ENCODE measurements at regions of chr15 and their contacts with region 1.

Region 1: GRCh38 chr15:90529371-90530249 is at the start of gene CRTC3:
- DNase-seq: peak; percentile 48
- ATAC-seq: peak; percentile 96
- H3K4me3 ChIP-seq: peak within 1 kb of the TSS; percentile 92
- H3K27ac ChIP-seq: peak within 1 kb of the TSS; percentile 94
- H3K4me1 ChIP-seq: peaks cover 11% of the 10 kb centered on the region
- H3K27me3 ChIP-seq: no peaks in the 10 kb centered on the region
- CTCF ChIP-seq: peak; percentile 23; the same call in 1 of the 2 replicates
- POLR2A ChIP-seq: peak; percentile 66; the same call in 1 of the 2 replicates
- RAD21 ChIP-seq: no peak
- total RNA-seq, gene CRTC3: 4.7 and 6.7 TPM in 2 replicates

Region 2: DNA sequence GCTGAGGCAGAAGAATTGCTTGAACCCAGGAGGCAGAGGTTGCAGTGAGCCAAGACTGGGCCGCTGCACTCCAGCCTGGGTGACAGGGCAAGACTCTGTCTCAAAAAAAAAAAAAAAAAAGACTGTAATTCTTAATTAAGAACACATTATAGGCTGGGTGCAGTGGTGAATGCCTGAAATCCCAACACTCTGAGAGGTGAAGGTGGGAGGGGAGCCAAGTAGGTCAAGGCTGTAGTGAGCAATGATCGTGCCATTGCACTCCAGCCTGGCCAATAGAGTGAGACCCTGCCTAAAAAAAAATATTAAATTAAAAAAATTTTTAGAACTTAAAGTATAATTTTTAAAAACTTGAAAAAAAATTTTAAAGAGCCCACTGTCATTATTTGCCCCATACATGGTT is 603.5 kb before region 1 on chr15:
- CTCF ChIA-PET with region 1: no interaction called
- POLR2A ChIA-PET with region 1: interaction called, 17 read pairs
- dilution Hi-C with region 1: no loop called
- in situ Hi-C with region 1: no loop called
- intact Hi-C with region 1: no loop called
- DNase-seq: no peak
- ATAC-seq: no peak
- H3K4me3 ChIP-seq: no peak overlapping the region
- H3K27ac ChIP-seq: no peak overlapping the region
- H3K4me1 ChIP-seq: no peaks in the 10 kb centered on the region
- H3K27me3 ChIP-seq: peaks cover 15% of the 10 kb centered on the region
- CTCF ChIP-seq: no peak
- POLR2A ChIP-seq: no peak
- RAD21 ChIP-seq: no peak

Region 3: GRCh38 chr15:90547540-90547939 is 17.9 kb after region 1 on chr15:
- CTCF ChIA-PET with region 1: no interaction called
- POLR2A ChIA-PET with region 1: no interaction called
- dilution Hi-C with region 1: no loop called
- in situ Hi-C with region 1: no loop called
- intact Hi-C with region 1: loop called (anchors 2 kb)
- DNase-seq: no peak
- ATAC-seq: no peak
- H3K4me3 ChIP-seq: no peak overlapping the region
- H3K27ac ChIP-seq: no peak overlapping the region
- H3K4me1 ChIP-seq: peaks cover 9% of the 10 kb centered on the region
- H3K27me3 ChIP-seq: no peaks in the 10 kb centered on the region
- CTCF ChIP-seq: no peak
- POLR2A ChIP-seq: no peak
- RAD21 ChIP-seq: no peak

Measured in IMR-90 (cell line).